GM18951 (cell line): ENCODE measurements at regions of chr1 and their contacts with region 1.

Region 1: DNA sequence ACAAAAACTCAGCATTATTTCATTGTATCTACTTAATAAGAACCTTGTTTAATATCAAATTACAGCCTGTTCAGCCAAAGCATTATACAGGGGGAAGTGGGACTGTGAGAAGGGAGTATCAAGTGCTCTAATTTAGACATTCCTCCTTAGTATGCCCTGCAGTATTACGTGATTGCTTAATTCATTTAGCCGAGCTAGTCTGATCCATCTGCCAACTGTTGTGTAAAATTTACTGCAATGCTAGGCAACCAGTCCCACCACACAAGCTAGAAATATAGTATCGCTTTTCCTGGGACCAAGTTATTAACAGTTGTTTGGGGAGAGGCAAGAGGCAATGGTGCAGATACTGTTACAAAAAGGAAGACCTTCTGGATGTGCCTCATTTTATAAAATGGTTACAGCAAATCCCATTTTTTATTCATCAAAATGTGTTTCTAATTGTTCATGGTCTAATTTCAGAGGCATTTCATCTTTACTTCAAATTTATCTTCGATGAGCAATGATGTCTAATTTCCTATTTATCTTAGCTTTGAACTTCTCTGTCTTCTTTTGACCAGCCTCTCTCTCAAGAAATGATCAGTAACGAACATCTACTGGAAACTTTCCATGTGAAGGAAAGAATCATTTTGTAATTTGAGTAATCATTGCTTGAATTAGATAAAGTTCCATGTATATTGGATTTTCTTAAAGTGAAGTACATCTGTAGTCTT is 283.3 kb downstream of the DUSP10 start:
- POLR2A ChIP-seq: no peak

Region 2: DNA sequence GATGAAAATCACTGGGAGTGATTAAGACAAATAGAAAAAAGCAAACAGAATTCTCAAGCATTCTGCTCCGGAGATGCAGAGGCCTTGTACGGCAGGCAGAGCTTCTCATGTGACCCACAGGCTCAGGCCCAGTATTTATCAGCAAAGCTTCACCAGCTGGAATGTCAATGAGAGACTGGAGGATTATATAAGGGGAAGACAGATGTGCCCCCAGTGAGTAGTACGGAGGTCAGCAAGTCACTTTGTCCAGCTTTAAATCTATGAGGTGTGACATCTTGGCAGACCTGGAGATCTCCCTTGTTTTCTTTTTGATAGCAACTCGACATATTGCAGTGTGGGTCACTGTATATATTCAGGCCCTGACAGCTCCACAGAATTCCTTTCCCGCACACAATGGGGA is 982.5 kb after region 1 on chr1:
- in situ Hi-C with region 1: loop called (anchors 25 kb)
- POLR2A ChIP-seq: no peak